Heart left ventricle (tissue), 16 donors: ENCODE measurements at regions of chr10 and their contacts with region 1.

Region 1: GRCh38 chr10:13956826-13957225 is 370.1 kb downstream of the PRPF18 start:
- DNase-seq: peak; percentile 54 to 78 (median 62)
- ATAC-seq: peak; percentile 69 to 90 (median 83)
- H3K4me3 ChIP-seq: no peak overlapping the region
- H3K27ac ChIP-seq: peak overlapping the region in 7 of 12 donors; percentile 38 to 74 (median 45)
- H3K4me1 ChIP-seq: peaks cover 0 to 30% (median 12%) of the 10 kb centered on the region in 12 donors
- H3K27me3 ChIP-seq: no peaks in the 10 kb centered on the region
- CTCF ChIP-seq: peak in 7 of 12 donors; percentile 25 to 67 (median 47)
- POLR2A ChIP-seq: no peak

Region 2: GRCh38 chr10:13371897-13372470 is 584.8 kb before region 1 on chr10:
- intact Hi-C with region 1: no loop called
- DNase-seq: peak in 4 of 5 donors; percentile 38 to 63 (median 50)
- ATAC-seq: peak; percentile 67 to 98 (median 90)
- H3K4me3 ChIP-seq: no peak overlapping the region
- H3K27ac ChIP-seq: no peak overlapping the region
- H3K4me1 ChIP-seq: no peaks in the 10 kb centered on the region
- H3K27me3 ChIP-seq: peaks cover 0 to under 1% (median 0%) of the 10 kb centered on the region in 9 donors
- CTCF ChIP-seq: peak; percentile 81 to 95 (median 92)
- POLR2A ChIP-seq: no peak

Region 3: DNA sequence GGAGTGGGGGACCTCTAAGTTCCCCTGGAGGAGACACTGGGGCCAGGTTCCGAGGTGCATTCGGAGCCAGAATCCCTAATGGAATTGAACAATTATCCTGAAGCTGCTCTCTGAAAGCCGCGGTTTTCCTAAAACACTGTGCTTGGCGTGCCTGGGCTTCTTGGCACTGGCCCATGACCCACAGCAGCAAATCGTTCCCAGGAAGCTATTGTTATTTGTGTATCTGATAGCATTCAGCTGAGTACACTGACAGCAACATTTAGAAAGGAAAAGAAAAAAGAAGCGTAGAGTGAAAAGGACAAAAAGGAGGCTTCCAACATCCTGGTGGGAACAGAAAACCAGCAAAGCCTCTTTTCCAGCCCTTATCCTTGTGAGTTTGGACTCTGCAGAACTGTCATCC is 34.1 kb after region 1 on chr10:
- intact Hi-C with region 1: loop called in 1 of 10 experiments (anchors 1 kb)
- DNase-seq: peak in 2 of 5 donors; percentile 31
- ATAC-seq: peak; percentile 27 to 53 (median 40)
- H3K4me3 ChIP-seq: peak overlapping the region in 7 of 12 donors; percentile 3 to 39 (median 24)
- H3K27ac ChIP-seq: peak overlapping the region; percentile 59 to 89 (median 80)
- H3K4me1 ChIP-seq: peaks cover 0 to 60% (median 35%) of the 10 kb centered on the region in 12 donors
- H3K27me3 ChIP-seq: no peaks in the 10 kb centered on the region
- CTCF ChIP-seq: no peak
- POLR2A ChIP-seq: no peak

Region 4: DNA sequence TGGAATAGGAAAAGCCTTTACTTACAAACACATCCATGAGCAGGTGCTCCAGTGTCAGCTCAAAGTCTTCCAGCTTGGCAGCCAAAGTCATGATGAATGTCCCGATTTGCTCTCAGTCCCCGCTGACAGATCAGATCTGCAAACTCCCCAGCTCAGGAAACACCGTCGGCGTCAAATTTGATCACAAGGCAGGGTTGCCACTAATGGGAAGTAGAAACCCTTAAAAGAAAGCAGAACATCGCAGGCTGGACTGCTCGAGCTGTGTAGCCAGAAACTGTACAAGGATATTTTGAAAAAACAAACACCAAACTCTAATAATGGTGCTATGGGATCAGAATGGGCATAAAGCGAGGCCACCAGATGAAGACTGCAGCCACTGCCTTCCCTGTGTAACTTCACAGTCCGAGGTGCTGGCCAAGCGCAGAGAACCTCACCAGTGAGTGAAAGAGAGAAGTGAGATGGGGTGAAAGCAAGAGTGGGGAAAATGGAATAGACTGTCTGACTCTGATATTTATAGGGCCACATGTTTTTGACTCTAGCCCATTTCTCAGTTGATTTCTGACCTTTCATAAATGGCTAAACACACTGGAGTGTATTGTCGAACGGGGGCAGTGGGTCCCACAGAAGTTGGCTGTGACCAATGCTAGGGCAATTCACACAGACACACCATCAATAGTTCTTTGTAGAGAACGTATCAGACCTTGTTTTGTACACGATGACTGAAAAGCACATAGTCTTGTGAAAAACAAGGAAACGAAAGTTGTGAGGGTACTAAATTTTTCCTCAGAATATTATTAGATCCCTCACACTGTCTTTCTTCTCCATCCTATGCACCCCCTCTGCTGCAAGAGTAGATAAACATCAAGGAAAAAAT is 67.7 kb after region 1 on chr10:
- intact Hi-C with region 1: loop called in 1 of 10 experiments (anchors 5 kb)
- DNase-seq: peak in 2 of 5 donors; percentile 31 to 45
- ATAC-seq: peak in 3 of 4 donors; percentile 28 to 79 (median 34)
- H3K4me3 ChIP-seq: peak overlapping the region in 7 of 12 donors; percentile 18 to 32 (median 23)
- H3K27ac ChIP-seq: peak overlapping the region in 4 of 12 donors; percentile 21 to 73 (median 42)
- H3K4me1 ChIP-seq: peaks cover 0 to 3% (median 0%) of the 10 kb centered on the region in 12 donors
- H3K27me3 ChIP-seq: peaks cover 0 to 5% (median 0%) of the 10 kb centered on the region in 9 donors
- CTCF ChIP-seq: no peak
- POLR2A ChIP-seq: no peak

Region 5: DNA sequence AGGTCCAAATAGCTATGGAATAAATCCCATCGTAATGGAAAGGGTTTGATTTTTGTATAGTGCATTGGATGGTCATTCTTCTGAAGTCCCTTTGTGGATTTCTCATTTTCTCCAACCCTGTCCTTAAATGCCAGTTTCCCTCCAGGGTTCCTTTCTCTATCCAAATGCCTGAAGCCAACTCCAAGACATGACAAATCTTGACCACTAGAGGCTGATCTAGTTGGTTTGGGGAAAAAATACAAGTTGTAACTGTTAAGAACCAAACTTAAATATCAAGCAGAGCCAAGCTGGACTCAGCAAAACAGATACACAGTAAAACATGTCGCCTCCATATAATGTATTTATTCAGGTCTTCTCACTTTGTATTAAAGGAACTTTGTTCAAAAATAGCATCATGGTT is 345.2 kb after region 1 on chr10:
- intact Hi-C with region 1: no loop called
- DNase-seq: no peak
- ATAC-seq: no peak
- H3K4me3 ChIP-seq: no peak overlapping the region
- H3K27ac ChIP-seq: no peak overlapping the region
- H3K4me1 ChIP-seq: peaks cover 0 to 4% (median 0%) of the 10 kb centered on the region in 12 donors
- H3K27me3 ChIP-seq: peaks cover 0 to 19% (median 0%) of the 10 kb centered on the region in 9 donors
- CTCF ChIP-seq: peak in 2 of 12 donors; percentile 8 to 27
- POLR2A ChIP-seq: no peak